ENCODE measurements at regions of chr1 and their contacts with region 1.

Region 1: DNA sequence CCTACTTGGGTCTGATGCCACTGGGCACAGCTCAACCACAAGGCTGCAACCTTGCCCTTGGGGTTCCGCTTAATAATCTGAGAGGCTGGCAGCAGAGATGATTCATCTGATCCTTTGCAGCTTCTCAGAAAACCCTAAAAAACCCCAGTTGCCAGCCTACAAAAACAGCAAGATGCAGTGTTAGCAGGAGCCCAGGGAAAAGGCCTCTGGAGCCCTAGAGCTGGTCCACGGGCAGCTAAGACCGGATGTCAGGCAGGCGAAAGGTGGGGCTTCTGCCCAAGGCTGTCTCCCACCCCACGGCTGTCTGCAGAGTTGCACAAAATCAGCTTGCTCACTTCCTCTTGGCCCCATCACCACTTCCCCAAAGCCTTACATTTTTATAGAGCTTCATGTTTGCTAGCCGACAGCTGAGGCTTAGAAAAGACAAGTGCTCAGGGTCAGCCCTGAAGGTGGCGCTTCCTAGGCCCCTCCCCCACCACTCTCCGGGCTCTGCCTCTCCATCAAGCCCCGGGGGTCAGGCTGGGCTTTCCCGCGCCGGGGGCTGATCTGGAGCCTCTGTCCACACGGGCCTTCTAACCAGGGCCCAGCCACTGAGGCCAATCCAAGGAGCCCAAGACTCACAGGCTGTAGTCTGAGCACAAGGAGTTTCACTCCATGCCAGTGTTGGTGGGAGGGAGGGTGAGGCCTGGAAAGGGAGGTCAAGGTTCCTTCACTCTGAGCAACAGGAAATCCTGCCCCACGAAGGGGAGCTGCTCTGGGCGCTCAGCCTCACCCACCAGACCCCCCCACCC is 4.2 kb upstream of the ADORA3 start:
- DNase-seq: peak; percentile 64
- H3K4me3 ChIP-seq: peak overlapping the region in 1 of 3 experiments; percentile 4
- H3K27ac ChIP-seq: peak overlapping the region; percentile 86
- H3K4me1 ChIP-seq: peaks cover 15% of the 10 kb centered on the region
- H3K27me3 ChIP-seq: peaks cover 0 to 2% of the 10 kb centered on the region in 2 experiments
- CTCF ChIP-seq: peak in 1 of 2 donors; percentile 17
- POLR2A ChIP-seq: no peak

Region 2: GRCh38 chr1:110034451-110035235 is 1473.0 kb before region 1 on chr1 and contains the start of gene STRIP1:
- CTCF ChIA-PET with region 1: no interaction called
- POLR2A ChIA-PET with region 1: no interaction called
- dilution Hi-C with region 1: no loop called
- intact Hi-C with region 1: loop called (anchors 5 kb)
- DNase-seq: peak; percentile 96
- H3K4me3 ChIP-seq: peak within 1 kb of the TSS; percentile 76 to 90 (median 82)
- H3K27ac ChIP-seq: peak within 1 kb of the TSS; percentile 61
- H3K4me1 ChIP-seq: peaks cover 9% of the 10 kb centered on the region
- H3K27me3 ChIP-seq: no peaks in the 10 kb centered on the region
- CTCF ChIP-seq: no peak
- POLR2A ChIP-seq: peak; percentile 74
- total RNA-seq, gene STRIP1: 38.9 and 42.1 TPM in 2 replicates

Region 3: DNA sequence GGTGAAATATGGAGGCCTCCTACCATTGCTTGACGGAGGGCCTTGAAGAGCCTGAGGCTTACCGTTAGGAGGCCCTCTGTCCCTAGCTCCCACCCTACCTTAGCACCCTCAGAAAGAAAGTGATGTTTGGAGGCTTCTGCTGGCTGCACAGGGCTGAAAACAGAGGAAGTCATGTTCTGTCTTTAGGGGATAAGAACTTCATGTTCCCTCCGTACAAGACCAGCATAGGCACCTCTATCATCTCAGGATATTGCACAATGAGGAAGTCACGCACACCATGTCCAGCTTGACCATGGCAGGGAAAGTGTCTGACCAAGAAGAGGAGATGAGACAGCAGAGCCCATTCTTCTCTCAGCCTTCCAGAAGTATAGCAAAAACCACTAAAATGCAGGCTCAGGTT is 18.0 kb before region 1 on chr1:
- CTCF ChIA-PET with region 1: interaction called, 12 read pairs
- POLR2A ChIA-PET with region 1: no interaction called
- dilution Hi-C with region 1: no loop called
- intact Hi-C with region 1: no loop called
- DNase-seq: no peak
- H3K4me3 ChIP-seq: no peak overlapping the region
- H3K27ac ChIP-seq: no peak overlapping the region
- H3K4me1 ChIP-seq: no peaks in the 10 kb centered on the region
- H3K27me3 ChIP-seq: peaks cover 16 to 18% of the 10 kb centered on the region in 2 experiments
- CTCF ChIP-seq: no peak
- POLR2A ChIP-seq: no peak

Region 4: DNA sequence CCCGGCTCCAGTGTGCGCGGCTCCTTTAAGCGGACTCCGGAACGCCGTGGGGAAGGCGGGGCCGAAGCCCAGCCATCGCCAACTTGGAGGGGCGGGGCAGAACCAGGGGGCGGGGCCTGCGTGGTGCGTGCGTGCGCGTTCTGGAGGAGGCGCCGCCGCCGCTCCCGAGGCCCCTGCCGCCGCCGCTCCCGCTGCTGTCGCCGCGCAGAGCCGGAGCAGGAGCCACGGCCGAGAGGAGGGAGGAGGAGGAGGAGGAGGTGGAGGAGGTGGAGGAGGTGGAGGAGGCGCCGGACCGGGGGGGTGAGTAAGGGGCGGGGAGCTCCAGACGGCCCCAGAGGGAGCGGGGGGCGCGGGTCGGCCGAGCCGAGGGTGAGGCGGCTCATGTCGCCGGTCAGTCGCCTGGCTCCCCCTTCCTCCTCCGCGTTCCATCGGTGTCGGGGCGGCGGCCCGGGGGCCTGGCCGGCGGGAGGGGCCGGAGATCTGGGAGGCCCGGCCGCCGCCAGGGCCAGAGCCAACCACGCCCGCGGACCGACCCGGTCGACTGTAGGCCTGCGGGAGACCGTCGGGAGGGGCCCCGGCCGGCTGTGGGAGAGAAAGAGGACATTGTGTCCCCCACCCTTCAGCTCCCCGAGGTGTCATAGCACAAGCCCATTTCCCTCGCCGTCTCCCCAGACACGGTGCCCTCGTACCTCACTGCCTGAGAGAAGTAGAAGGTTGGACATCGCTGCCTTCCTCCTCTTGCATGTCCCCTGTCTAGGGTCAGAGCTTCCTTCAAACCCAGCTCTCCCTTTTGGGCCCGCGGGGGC is 112.2 kb after region 1 on chr1 and contains the start of gene RAP1A:
- CTCF ChIA-PET with region 1: interaction called, 20 read pairs
- POLR2A ChIA-PET with region 1: no interaction called
- dilution Hi-C with region 1: no loop called
- intact Hi-C with region 1: loop called (anchors 2 kb)
- DNase-seq: peak; percentile 93
- H3K4me3 ChIP-seq: peak within 1 kb of the TSS; percentile 37 to 98 (median 84)
- H3K27ac ChIP-seq: peak within 1 kb of the TSS; percentile 52
- H3K4me1 ChIP-seq: peaks cover 12% of the 10 kb centered on the region
- H3K27me3 ChIP-seq: peaks cover 0 to 4% of the 10 kb centered on the region in 2 experiments
- CTCF ChIP-seq: no peak
- POLR2A ChIP-seq: peak; percentile 39
- total RNA-seq, gene RAP1A: 56.4 and 57.1 TPM in 2 replicates

Region 5: GRCh38 chr1:111690306-111690617 is 182.7 kb after region 1 on chr1:
- CTCF ChIA-PET with region 1: interaction called, 18 read pairs
- POLR2A ChIA-PET with region 1: no interaction called
- dilution Hi-C with region 1: no loop called
- intact Hi-C with region 1: no loop called
- DNase-seq: peak; percentile 75
- H3K4me3 ChIP-seq: no peak overlapping the region
- H3K27ac ChIP-seq: no peak overlapping the region
- H3K4me1 ChIP-seq: no peaks in the 10 kb centered on the region
- H3K27me3 ChIP-seq: no peaks in the 10 kb centered on the region
- CTCF ChIP-seq: no peak
- POLR2A ChIP-seq: no peak

Region 6: DNA sequence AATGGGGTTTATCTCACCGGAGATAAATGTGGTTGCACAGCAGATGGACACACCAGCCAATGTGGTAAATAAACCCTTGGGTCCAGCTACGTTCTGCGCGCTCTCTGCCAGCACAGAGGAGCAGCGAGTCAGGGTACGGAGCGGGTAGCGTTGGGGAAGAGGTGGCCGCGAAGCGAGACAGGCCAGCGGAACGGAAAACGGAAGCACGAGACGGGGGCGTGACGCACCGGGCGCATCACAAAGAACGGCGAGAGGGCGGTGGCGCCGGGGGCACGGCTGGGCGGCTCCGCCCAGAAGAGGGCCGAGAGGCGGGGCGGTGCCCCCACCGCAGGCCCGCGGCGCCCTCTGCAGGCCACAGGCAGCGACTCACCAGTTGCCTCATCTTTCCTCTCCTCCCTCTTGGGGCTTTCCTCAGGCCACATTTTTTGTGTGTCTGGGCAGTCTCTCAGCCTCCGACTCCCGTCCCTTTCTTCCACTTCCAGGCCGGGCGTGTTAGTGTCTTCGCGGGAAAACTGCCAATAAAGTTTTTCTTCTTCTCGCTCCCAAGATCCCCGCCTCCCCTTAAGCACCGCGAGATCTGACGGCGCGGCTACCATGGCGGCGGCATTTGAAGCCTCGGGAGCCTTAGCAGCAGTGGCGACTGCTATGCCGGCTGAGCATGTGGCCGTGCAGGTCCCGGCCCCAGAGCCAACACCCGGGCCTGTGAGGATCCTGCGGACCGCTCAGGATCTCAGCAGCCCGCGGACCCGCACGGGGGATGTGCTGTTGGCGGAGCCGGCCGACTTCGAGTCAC is 247.9 kb after region 1 on chr1 and contains the start of gene DDX20:
- CTCF ChIA-PET with region 1: interaction called, 15 read pairs
- POLR2A ChIA-PET with region 1: no interaction called
- dilution Hi-C with region 1: no loop called
- intact Hi-C with region 1: loop called (anchors 1 kb)
- DNase-seq: peak; percentile 96
- H3K4me3 ChIP-seq: peak within 1 kb of the TSS; percentile 80 to 91 (median 82)
- H3K27ac ChIP-seq: peak within 1 kb of the TSS; percentile 90
- H3K4me1 ChIP-seq: peaks cover 24% of the 10 kb centered on the region
- H3K27me3 ChIP-seq: no peaks in the 10 kb centered on the region
- CTCF ChIP-seq: peak; percentile 82 to 83
- POLR2A ChIP-seq: peak; percentile 95
- total RNA-seq, gene DDX20: 14.5 and 15.9 TPM in 2 replicates

Region 7: DNA sequence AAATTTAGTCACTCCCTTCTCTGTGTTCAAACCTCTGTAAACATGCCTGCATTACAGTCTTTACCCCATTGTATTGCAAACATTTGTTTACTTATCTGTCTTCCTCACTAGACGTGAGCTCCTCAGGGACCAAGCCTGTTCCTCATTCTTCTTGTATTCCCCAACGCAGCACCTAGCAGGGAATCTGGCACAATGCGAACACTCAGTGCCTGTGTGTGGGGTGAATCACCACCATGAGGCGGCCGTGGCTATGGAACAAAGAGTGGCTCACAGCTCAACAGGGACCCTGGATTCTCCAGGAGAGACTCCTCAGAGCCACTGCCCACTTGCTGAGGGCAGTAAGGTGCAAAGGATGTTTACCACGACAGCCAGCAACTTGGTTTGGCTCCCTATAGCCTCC is 343.9 kb after region 1 on chr1:
- CTCF ChIA-PET with region 1: no interaction called
- POLR2A ChIA-PET with region 1: no interaction called
- dilution Hi-C with region 1: no loop called
- intact Hi-C with region 1: no loop called
- DNase-seq: no peak
- H3K4me3 ChIP-seq: no peak overlapping the region
- H3K27ac ChIP-seq: no peak overlapping the region
- H3K4me1 ChIP-seq: no peaks in the 10 kb centered on the region
- H3K27me3 ChIP-seq: no peaks in the 10 kb centered on the region
- CTCF ChIP-seq: no peak
- POLR2A ChIP-seq: no peak